ENCODE measurements at regions of chr2 and their contacts with region 1.

Region 1: GRCh38 chr2:163878531-163879117 is 142.8 kb upstream of the FIGN start:
- DNase-seq: no peak
- ATAC-seq: no peak
- H3K4me3 ChIP-seq: no peak overlapping the region
- H3K27ac ChIP-seq: no peak overlapping the region
- H3K4me1 ChIP-seq: peaks cover 0 to 15% (median 2%) of the 10 kb centered on the region in 12 donors
- H3K27me3 ChIP-seq: no peaks in the 10 kb centered on the region
- CTCF ChIP-seq: peak in 7 of 12 donors; percentile 20 to 49 (median 33)
- POLR2A ChIP-seq: no peak

Region 2: DNA sequence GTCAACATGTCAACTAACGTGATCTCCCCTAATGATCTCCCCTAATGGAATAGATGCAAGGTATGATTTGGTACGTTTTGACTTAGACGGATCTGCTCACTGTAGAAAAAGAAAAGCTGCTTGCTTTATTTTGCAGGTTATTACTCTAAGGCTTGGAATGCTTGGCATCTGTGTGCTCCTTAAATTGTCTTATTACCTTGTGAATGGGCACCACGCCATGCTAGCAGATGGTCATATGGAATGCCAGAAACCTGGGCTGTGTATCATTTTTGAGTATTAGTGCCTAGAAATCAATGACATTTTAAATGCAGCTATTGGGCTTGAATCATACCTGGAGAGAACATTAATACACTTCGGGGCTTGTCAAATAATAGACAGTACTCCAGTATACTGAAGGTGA is 126.4 kb before region 1 on chr2:
- intact Hi-C with region 1: loop called in 1 of 10 experiments (anchors 10 kb)
- DNase-seq: no peak
- ATAC-seq: no peak
- H3K4me3 ChIP-seq: no peak overlapping the region
- H3K27ac ChIP-seq: no peak overlapping the region
- H3K4me1 ChIP-seq: no peaks in the 10 kb centered on the region
- H3K27me3 ChIP-seq: no peaks in the 10 kb centered on the region
- CTCF ChIP-seq: no peak
- POLR2A ChIP-seq: no peak

Region 3: DNA sequence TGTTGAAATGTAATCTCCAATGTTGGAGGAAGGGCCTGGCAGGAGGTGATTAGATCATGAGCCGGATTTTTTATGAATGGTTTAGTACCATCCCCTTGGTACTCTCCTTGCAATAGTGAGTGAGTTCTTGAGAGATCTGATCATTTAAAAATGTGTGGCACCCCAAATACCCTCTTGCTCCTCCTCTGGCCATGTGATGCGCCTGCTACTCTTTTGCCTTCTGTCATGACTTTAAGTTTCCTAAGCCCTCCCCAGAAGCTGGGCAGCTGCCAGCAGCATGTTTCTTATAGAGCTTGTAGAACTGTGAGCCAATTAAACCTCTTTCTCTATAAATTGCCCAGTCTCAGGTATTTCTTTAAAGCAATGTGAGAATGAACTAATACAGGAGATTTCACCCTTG is 70.2 kb before region 1 on chr2:
- intact Hi-C with region 1: no loop called
- DNase-seq: no peak
- ATAC-seq: no peak
- H3K4me3 ChIP-seq: no peak overlapping the region
- H3K27ac ChIP-seq: no peak overlapping the region
- H3K4me1 ChIP-seq: no peaks in the 10 kb centered on the region
- H3K27me3 ChIP-seq: no peaks in the 10 kb centered on the region
- CTCF ChIP-seq: no peak
- POLR2A ChIP-seq: no peak

Measured in heart left ventricle (tissue), 16 donors.